A549 (cell line): ENCODE measurements at regions of chr2 and their contacts with region 1.

Region 1: DNA sequence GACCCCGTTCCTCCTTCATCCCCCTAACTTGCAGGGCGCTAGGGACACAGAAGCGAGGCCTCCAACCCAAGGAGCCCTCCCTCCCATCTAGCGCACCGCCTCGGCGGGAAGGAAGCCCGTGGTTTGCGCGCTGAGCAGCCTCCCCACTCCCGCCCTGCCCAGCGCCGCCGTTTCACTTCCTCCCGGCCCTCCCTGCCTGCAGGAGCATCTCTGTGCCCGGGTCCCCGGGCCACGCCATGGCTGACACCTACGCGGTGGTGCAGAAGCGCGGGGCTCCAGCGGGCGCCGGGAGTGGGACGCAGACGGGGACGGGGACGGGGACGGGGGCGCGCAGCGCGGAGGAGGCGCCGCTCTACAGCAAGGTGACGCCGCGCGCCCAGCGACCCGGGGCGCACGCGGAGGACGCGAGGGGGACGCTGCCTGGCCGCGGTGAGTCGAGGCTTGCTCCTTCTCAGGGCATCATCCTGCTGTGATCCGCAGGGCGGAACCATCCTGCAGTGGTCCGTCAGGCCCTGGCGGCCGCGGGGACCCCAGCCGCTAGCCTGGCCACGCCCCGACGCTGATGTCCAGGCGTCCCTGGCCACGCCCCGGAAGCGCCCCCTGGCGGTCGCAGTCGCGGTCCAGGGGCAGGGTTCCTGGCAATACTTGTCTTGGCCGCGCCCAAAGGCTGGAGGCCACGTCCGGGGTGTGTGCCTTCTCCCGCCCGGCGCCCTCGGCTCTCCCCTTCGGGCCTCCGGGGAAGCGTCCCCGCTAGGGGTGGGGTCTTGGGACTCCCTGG is 16.4 kb downstream of the PTPN18 start:
- DNase-seq: peak; percentile 81 to 90
- ATAC-seq: peak; percentile 92 to 97
- H3K4me3 ChIP-seq: peak overlapping the region; percentile 72
- H3K27ac ChIP-seq: peak overlapping the region; percentile 97 to 98
- H3K4me1 ChIP-seq: peaks cover 24% of the 10 kb centered on the region
- CTCF ChIP-seq: peak; percentile 82
- EP300 ChIP-seq: no peak
- POLR2A ChIP-seq: peak; percentile 92
- RAD21 ChIP-seq: peak in 1 of 2 experiments; percentile 37; a peak in 1 of 5 replicates

Region 2: GRCh38 chr2:130231656-130232055 is 140.6 kb before region 1 on chr2:
- CTCF ChIA-PET with region 1: no interaction called
- POLR2A ChIA-PET with region 1: no interaction called
- DNase-seq: no peak
- ATAC-seq: no peak
- H3K4me3 ChIP-seq: no peak overlapping the region
- H3K27ac ChIP-seq: no peak overlapping the region
- H3K4me1 ChIP-seq: no peaks in the 10 kb centered on the region
- CTCF ChIP-seq: no peak
- EP300 ChIP-seq: no peak
- POLR2A ChIP-seq: no peak
- RAD21 ChIP-seq: no peak

Region 3: DNA sequence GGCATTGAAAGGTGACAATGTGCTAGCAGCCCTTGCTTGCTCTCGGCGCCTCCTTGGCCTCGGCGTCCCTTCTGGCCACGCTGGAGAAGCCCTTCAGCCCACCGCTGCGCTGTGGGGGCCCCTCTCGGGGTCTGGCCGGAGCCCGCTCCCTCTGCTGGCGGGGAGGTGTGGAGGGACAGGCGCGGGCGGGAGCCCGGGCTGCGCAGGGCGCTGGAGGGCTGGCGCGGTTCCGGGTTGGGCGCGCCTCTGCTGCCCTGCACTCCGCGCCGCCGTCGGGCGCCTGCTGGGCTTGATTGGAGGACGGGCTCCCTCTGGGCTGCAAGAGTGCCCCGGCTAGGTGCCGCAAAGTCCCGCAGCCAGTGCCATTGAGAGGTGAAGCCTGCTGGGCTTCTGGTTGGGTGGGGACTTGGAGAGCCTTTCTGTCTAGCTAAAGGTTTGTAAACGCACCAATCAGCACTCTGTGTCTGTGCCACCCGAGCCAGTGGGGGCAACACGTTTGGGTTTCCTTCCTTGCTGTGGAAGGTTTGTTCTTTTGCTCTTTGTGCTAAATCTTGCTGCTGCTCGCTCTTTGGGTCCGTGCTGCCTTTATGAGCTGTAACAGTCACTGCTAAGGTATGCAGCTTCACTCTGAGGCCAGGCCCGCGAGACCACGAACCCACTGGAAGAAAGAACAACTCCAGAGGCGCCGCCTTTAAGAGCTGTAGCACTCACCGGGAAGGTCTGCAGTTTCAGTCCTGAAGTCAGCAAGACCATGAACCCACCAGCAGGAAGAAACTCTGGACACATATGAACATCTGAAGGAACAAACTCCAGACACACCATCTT is 44.3 kb before region 1 on chr2:
- CTCF ChIA-PET with region 1: no interaction called
- POLR2A ChIA-PET with region 1: no interaction called
- DNase-seq: no peak
- ATAC-seq: no peak
- H3K4me3 ChIP-seq: no peak overlapping the region
- H3K27ac ChIP-seq: no peak overlapping the region
- H3K4me1 ChIP-seq: no peaks in the 10 kb centered on the region; the same call in 2 of the 3 replicates
- CTCF ChIP-seq: no peak
- EP300 ChIP-seq: no peak
- POLR2A ChIP-seq: no peak
- RAD21 ChIP-seq: no peak

Region 4: DNA sequence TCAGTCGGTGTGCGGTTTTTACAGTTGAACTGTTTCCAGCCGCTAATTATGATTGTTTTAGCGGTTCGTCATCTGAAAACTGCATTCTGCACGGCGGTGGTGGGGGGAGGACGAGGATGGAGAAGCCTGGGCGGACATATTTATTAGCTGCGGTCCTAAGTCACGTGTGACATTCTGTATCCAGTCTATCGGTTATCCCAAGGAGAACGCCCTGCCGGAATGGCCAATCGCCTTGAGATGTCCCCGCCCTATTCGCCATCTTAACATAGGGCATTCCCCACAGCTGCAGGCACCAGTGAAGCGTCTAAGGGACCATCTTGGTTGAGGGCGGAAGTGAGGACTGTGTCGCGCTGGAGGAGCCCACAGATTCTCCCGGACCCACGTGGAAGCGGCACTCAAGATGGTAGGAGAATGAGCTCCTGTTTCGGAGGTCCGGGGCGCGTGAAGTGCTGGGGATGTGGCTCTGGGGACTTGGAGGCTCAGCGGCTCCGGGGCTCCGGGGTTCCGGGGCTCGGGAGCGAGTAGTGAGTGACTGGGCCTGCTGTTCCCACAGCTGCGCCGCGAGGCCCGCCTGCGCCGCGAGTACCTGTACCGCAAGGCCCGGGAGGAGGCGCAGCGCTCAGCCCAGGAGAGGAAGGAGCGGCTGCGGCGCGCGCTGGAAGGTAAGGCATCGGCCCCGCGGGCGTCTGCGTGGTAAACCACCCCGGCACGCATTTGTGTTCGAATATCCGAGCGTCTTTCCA is 29.5 kb before region 1 on chr2 and contains the start of gene IMP4:
- CTCF ChIA-PET with region 1: interaction called, 18 read pairs
- POLR2A ChIA-PET with region 1: interaction called, 21 read pairs
- DNase-seq: peak; percentile 85 to 99
- ATAC-seq: peak; percentile 87 to 95
- H3K4me3 ChIP-seq: peak within 1 kb of the TSS; percentile 88
- H3K27ac ChIP-seq: peak within 1 kb of the TSS; percentile 90 to 95
- H3K4me1 ChIP-seq: peaks cover 18% of the 10 kb centered on the region
- CTCF ChIP-seq: no peak
- EP300 ChIP-seq: no peak
- POLR2A ChIP-seq: peak; percentile 76
- RAD21 ChIP-seq: no peak
- polyA plus RNA-seq, gene IMP4: 113 and 118 TPM in 2 replicates

Region 5: GRCh38 chr2:130355578-130356431 is 16.4 kb before region 1 on chr2 and contains the start of gene PTPN18:
- CTCF ChIA-PET with region 1: interaction called, 27 read pairs
- POLR2A ChIA-PET with region 1: interaction called, 6 read pairs
- DNase-seq: peak; percentile 68 to 85
- ATAC-seq: peak; percentile 90 to 97
- H3K4me3 ChIP-seq: peak within 1 kb of the TSS; percentile 91
- H3K27ac ChIP-seq: peak within 1 kb of the TSS; percentile 90 to 97
- H3K4me1 ChIP-seq: peaks cover 17% of the 10 kb centered on the region; the same call in 2 of the 3 replicates
- CTCF ChIP-seq: peak; percentile 52
- EP300 ChIP-seq: no peak
- POLR2A ChIP-seq: peak; percentile 91
- RAD21 ChIP-seq: peak; percentile 33 to 56; a peak in 4 of 5 replicates
- polyA plus RNA-seq, gene PTPN18: 20.4 and 23.7 TPM in 2 replicates

Region 6: DNA sequence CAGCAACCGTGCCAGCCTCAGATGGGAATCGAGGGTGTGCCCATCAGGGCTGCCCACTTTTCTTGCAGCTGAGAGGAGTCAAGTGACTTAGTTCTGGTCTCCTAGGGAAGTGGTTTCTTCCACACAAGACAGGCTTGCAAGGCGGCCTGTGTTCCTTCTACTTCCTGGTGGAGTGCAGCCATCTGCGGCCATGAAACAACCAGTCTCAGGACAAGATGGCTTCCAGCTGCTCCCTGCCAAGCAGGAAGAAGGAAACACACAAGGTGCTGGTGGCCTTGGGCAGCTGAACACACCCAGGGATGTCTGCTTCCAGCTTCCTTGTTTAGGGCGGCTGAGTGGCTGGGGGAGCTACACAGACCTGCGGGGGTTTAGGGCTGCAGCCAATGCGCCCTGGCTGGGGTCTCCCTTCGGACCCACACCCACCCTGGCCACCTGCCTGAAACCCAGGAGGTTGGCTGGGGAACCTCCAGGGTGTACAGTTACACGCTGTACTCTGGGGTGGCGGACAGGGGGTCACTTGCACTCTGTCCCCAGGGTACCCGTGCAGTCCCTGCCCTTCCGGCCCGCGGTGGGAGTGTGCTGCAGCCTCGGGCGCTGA is 18.3 kb after region 1 on chr2:
- CTCF ChIA-PET with region 1: interaction called, 35 read pairs
- POLR2A ChIA-PET with region 1: interaction called, 3 read pairs
- DNase-seq: no peak
- ATAC-seq: peak; percentile 15; a peak in 4 of 6 replicates
- H3K4me3 ChIP-seq: peak overlapping the region; percentile 56
- H3K27ac ChIP-seq: peak overlapping the region in 1 of 2 experiments; percentile 92; a peak in 3 of 6 replicates
- H3K4me1 ChIP-seq: peaks cover 16% of the 10 kb centered on the region
- CTCF ChIP-seq: no peak
- EP300 ChIP-seq: no peak
- POLR2A ChIP-seq: no peak
- RAD21 ChIP-seq: no peak